Activated CD8-positive, alpha-beta T cell treated with anti-CD3 and anti-CD28 coated beads for 36 hours (primary cell): ENCODE measurements at regions of chr5 and their contacts with region 1.

Region 1: GRCh38 chr5:10607666-10608073 is 43.8 kb downstream of the ANKRD33B start:
- DNase-seq: peak; percentile 29
- ATAC-seq: peak; percentile 31
- H3K4me3 Mint-ChIP-seq: no peak overlapping the region
- H3K27ac Mint-ChIP-seq: no peak overlapping the region
- H3K4me1 Mint-ChIP-seq: peaks cover 18% of the 10 kb centered on the region
- H3K27me3 Mint-ChIP-seq: peaks cover 17% of the 10 kb centered on the region
- CTCF ChIP-seq: no peak

Region 2: DNA sequence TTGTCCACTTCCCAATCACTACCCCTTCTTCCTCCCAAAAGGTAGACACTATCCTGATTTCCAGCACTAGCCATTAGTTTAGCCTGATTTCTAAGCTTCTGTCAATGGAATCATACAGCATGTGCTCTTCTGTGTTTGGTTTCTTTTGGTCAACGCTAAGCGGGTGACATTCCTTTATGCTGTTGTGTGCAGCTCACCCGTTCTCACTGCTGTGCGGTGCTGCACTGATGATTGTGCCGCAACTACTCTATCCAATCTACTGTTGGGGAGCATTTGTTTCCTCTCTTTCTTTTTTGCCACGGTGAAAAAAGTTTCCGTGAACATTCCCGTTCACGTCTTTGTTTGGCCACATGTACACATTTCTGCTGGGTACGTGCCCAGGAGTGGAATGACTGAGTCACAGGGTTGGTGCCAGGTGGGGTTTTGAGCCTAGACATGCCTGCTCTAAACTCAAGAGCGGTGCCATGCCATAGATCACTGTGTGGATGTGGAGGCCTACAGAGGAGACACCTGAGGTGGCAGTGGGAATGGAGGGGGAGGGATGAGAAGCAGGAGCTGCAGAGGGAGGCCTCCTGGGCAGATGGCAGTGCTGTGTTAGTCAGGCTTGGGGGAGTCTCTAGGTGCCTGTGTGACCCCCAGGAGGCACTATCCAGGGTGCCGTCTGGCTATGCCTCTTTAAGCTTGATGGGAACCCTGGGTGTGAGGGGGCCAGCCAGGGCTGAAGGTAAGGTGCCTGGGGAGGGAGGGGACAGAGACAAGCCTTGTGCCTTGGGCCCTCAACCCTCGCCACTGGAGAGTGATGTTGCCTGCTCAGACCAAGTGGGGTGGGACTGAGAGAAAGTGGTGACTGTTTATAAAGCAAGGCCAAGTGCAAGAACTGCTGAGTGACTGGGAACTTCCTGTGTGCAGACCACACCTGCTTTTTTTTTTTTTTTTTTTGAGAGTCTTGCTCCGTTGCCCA is 55.2 kb before region 1 on chr5:
- CTCF ChIA-PET with region 1: no interaction called
- POLR2A ChIA-PET with region 1: no interaction called
- intact Hi-C with region 1: no loop called
- DNase-seq: no peak
- ATAC-seq: peak; percentile 62
- H3K4me3 Mint-ChIP-seq: no peak overlapping the region
- H3K27ac Mint-ChIP-seq: no peak overlapping the region
- H3K4me1 Mint-ChIP-seq: peaks cover 3% of the 10 kb centered on the region
- H3K27me3 Mint-ChIP-seq: peaks cover 7% of the 10 kb centered on the region
- CTCF ChIP-seq: no peak

Region 3: DNA sequence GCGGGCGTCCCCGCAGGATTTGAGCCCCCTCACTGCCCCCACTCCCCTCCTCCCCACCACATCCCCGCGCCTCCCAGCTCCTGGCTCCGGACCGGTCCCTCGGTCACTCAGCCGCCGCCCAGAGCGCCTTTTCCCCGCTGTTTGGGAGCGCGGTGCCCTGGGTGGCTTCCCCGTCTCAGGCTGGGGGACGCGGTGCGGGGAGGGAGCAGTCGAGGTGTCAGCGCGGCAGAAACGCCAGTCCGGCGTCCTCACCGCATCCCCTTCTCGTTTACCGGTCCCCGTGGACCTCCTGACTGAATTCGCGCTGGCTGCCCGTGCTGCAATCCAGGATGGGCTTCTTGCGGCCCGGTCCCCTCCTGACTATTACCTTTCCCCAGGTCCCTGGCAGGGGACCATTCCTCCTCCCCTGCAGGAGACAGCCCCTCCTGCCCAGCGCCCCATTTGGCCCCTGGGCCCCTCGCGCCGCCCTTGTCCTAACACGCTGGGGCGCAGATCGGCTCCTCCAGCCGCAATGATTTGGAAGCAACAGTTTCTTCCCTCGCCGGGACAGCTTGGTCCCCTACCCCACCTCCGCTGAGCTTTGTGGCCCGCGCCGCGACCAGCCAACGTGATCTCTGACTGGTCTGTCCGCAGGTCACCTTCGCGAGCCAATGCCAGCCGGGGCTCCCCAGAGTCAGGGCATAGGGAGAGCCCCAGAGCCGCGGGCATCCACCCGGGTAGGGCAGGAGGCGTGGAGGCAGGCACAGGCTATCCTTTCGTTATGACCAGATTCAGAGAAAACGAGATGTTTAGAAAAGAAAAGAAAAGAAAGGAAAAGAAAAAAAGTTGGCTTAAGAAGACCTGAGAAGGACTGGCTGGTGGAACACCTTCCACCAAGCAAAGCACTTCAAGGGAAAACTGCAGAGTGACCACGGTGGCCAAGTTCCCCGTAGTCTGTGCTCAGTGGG is 42.6 kb before region 1 on chr5:
- CTCF ChIA-PET with region 1: no interaction called
- POLR2A ChIA-PET with region 1: no interaction called
- intact Hi-C with region 1: loop called (anchors 5 kb)
- DNase-seq: peak; percentile 36
- ATAC-seq: no peak
- H3K4me3 Mint-ChIP-seq: peak overlapping the region; percentile 91
- H3K27ac Mint-ChIP-seq: peak overlapping the region; percentile 25
- H3K4me1 Mint-ChIP-seq: peaks cover 22% of the 10 kb centered on the region
- H3K27me3 Mint-ChIP-seq: peaks cover 14% of the 10 kb centered on the region
- CTCF ChIP-seq: no peak